ENCODE measurements at regions of chr1 and their contacts with region 1.

Region 1: GRCh38 chr1:145891587-145892485 is 6.2 kb upstream of the ANKRD35 start:
- DNase-seq: peak; percentile 99
- ATAC-seq: peak; percentile 93
- H3K4me3 ChIP-seq: peak overlapping the region; percentile 3; the same call in 1 of the 2 replicates
- H3K27ac ChIP-seq: peak overlapping the region; percentile 71
- H3K4me1 ChIP-seq: peaks cover 12% of the 10 kb centered on the region
- H3K27me3 ChIP-seq: no peaks in the 10 kb centered on the region
- CTCF ChIP-seq: peak; percentile 99
- POLR2A ChIP-seq: peak; percentile 79; the same call in 1 of the 2 replicates
- RAD21 ChIP-seq: peak; percentile 93

Region 2: GRCh38 chr1:145858894-145859490 is 32.8 kb before region 1 on chr1 and contains the start of gene PIAS3:
- CTCF ChIA-PET with region 1: interaction called, 7 read pairs
- POLR2A ChIA-PET with region 1: interaction called, 5 read pairs
- dilution Hi-C with region 1: no loop called
- in situ Hi-C with region 1: no loop called
- intact Hi-C with region 1: loop called (anchors 1 kb)
- DNase-seq: peak; percentile 93
- ATAC-seq: peak; percentile 94
- H3K4me3 ChIP-seq: peak within 1 kb of the TSS; percentile 84
- H3K27ac ChIP-seq: peak within 1 kb of the TSS; percentile 96
- H3K4me1 ChIP-seq: peaks cover 3% of the 10 kb centered on the region
- H3K27me3 ChIP-seq: no peaks in the 10 kb centered on the region
- CTCF ChIP-seq: no peak
- POLR2A ChIP-seq: no peak
- RAD21 ChIP-seq: no peak
- total RNA-seq, gene PIAS3: 10.8 and 11.1 TPM in 2 replicates

Region 3: DNA sequence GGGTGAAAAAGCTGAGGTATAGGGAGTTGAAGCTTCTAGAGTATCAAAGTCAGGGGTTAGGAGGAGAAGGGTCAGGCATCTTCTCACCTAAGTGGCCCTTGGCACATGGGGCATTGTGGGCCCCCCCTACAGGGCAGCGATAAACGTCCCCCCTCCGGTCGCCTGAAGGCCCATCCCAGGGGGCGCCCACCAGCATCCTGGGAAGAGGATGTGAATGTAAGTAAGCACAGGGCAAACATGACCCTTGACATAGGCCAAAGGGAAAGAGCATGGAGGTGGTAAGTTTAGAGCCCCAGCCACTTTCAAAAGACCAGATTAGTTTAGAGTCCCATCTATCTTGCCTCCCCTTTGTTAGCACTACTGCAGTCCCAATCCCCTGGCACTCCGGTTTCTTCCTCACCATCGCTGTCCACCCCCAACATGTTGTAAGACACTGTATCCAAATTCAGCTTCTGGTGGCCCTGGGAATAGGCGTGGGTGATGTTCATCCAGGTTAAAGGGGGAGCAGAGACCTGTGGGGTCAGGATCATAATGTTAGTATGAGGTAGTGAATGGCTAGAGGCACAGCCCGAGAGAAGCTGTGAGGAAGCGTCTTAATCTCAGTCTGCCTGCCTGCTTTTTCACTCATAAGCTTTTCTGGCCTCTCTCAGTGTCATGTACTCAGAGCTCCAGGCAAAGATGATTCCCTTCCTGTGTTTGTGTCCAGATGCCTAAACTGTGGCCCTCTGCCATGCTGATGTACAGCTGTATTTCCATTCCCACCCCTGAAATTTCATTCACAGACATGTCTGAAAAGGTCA is 15.3 kb after region 1 on chr1:
- CTCF ChIA-PET with region 1: interaction called, 24 read pairs
- POLR2A ChIA-PET with region 1: no interaction called
- dilution Hi-C with region 1: no loop called
- in situ Hi-C with region 1: no loop called
- intact Hi-C with region 1: loop called (anchors 1 kb)
- DNase-seq: peak; percentile 30
- ATAC-seq: no peak
- H3K4me3 ChIP-seq: no peak overlapping the region
- H3K27ac ChIP-seq: no peak overlapping the region
- H3K4me1 ChIP-seq: peaks cover 7% of the 10 kb centered on the region
- H3K27me3 ChIP-seq: no peaks in the 10 kb centered on the region
- CTCF ChIP-seq: no peak
- POLR2A ChIP-seq: no peak
- RAD21 ChIP-seq: no peak

Region 4: GRCh38 chr1:145912128-145912641 is 20.3 kb after region 1 on chr1:
- CTCF ChIA-PET with region 1: interaction called, 24 read pairs
- POLR2A ChIA-PET with region 1: no interaction called
- dilution Hi-C with region 1: no loop called
- in situ Hi-C with region 1: no loop called
- intact Hi-C with region 1: loop called (anchors 1 kb)
- DNase-seq: no peak
- ATAC-seq: no peak
- H3K4me3 ChIP-seq: no peak overlapping the region
- H3K27ac ChIP-seq: no peak overlapping the region
- H3K4me1 ChIP-seq: peaks cover 7% of the 10 kb centered on the region
- H3K27me3 ChIP-seq: no peaks in the 10 kb centered on the region
- CTCF ChIP-seq: no peak
- POLR2A ChIP-seq: no peak
- RAD21 ChIP-seq: no peak

Region 5: GRCh38 chr1:145918144-145918992 is 26.5 kb after region 1 on chr1 and contains the start of gene PEX11B:
- CTCF ChIA-PET with region 1: interaction called, 12 read pairs
- POLR2A ChIA-PET with region 1: no interaction called
- dilution Hi-C with region 1: no loop called
- in situ Hi-C with region 1: no loop called
- intact Hi-C with region 1: loop called (anchors 2 kb)
- DNase-seq: peak; percentile 91
- ATAC-seq: peak; percentile 94
- H3K4me3 ChIP-seq: peak within 1 kb of the TSS; percentile 96
- H3K27ac ChIP-seq: peak within 1 kb of the TSS; percentile 85
- H3K4me1 ChIP-seq: peaks cover 8% of the 10 kb centered on the region
- H3K27me3 ChIP-seq: no peaks in the 10 kb centered on the region
- CTCF ChIP-seq: no peak
- POLR2A ChIP-seq: peak; percentile 49; the same call in 1 of the 2 replicates
- RAD21 ChIP-seq: no peak
- total RNA-seq, gene PEX11B: 15.4 and 19.7 TPM in 2 replicates

Region 6: GRCh38 chr1:145957443-145958319 is 65.8 kb after region 1 on chr1 and contains the start of gene LIX1L:
- CTCF ChIA-PET with region 1: interaction called, 4 read pairs
- POLR2A ChIA-PET with region 1: no interaction called
- dilution Hi-C with region 1: no loop called
- in situ Hi-C with region 1: no loop called
- intact Hi-C with region 1: loop called (anchors 10 kb)
- DNase-seq: peak; percentile 96
- ATAC-seq: peak; percentile 85
- H3K4me3 ChIP-seq: peak within 1 kb of the TSS; percentile 68
- H3K27ac ChIP-seq: peak within 1 kb of the TSS; percentile 94
- H3K4me1 ChIP-seq: peaks cover 18% of the 10 kb centered on the region
- H3K27me3 ChIP-seq: no peaks in the 10 kb centered on the region
- CTCF ChIP-seq: no peak
- POLR2A ChIP-seq: peak; percentile 86
- RAD21 ChIP-seq: no peak
- total RNA-seq, gene LIX1L: 14.7 and 18.3 TPM in 2 replicates

Region 7: DNA sequence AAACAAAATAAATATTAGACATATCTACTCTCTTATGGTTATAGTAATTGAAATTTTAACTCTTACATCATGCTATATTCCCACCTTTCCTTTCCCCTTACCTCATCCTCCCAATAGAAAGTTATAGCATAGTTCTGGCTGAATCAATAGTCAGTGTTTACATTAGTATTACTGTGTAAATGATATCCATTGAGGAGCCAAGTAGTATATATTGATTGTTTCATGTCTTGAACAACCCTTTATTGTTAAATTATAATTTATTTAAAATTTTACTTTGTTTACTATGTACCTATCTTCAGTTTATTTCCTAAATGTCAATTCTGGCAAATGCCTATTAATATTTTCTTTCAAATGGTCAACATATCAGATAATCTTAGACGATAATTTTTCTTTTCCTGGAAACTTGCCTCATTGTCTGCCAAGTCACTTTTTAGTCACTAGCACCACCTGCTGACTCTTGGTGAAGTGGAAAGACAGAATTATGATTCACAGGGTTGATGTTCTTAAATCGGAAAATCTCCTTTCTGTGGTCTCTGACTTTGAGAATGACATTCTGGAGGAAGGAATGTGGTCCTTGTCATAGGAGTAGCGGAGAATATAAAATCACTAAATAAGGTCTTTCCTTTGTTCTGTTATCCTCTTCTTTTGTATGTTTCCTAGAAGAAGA is 121.0 kb after region 1 on chr1:
- CTCF ChIA-PET with region 1: interaction called, 7 read pairs
- POLR2A ChIA-PET with region 1: no interaction called
- dilution Hi-C with region 1: no loop called
- in situ Hi-C with region 1: no loop called
- intact Hi-C with region 1: loop called (anchors 1 kb)
- DNase-seq: peak; percentile 86
- ATAC-seq: peak; percentile 72
- H3K4me3 ChIP-seq: no peak overlapping the region
- H3K27ac ChIP-seq: no peak overlapping the region
- H3K4me1 ChIP-seq: no peaks in the 10 kb centered on the region
- H3K27me3 ChIP-seq: peaks cover 9% of the 10 kb centered on the region
- CTCF ChIP-seq: peak; percentile 92
- POLR2A ChIP-seq: no peak; the same call in 1 of the 2 replicates
- RAD21 ChIP-seq: peak; percentile 91